Colonic mucosa (tissue), 4 donors: ENCODE measurements at regions of chr14 and their contacts with region 1.

Region 1: GRCh38 chr14:70714055-70714621 is 72.4 kb downstream of the TTC9 start:
- DNase-seq: peak; percentile 54
- H3K4me3 ChIP-seq: no peak overlapping the region
- H3K27ac ChIP-seq: no peak overlapping the region
- H3K4me1 ChIP-seq: no peaks in the 10 kb centered on the region
- H3K27me3 ChIP-seq: no peaks in the 10 kb centered on the region
- CTCF ChIP-seq: peak; percentile 59

Region 2: DNA sequence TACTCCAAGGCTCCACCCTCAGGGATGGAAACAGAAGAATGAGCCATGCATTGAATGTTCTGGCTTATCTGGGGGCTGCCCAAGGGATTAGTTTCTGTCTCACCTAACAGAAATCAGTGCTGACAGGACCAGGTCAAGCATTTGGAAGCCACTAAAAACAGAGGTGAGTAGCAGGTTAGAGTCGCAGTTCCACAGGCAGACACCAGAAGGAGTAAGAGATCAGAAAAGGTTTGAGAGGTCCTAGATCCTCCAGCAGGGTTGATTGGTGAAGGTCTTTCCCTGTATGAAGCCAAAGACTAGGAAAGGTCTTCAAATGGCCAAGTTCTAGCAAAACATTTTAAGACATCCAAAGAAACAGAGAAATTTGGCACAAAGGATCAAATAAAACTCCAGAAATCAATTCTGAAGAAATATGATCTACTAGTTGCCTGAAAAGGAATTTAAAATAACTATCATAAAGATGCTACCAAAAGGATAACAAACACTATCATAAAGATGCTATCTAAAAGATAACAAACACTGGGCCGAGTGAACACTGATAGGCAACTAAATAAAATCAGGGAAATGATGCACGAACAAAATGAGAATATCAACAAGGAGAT is 91.9 kb before region 1 on chr14:
- intact Hi-C with region 1: loop called (anchors 5 kb)
- DNase-seq: peak; percentile 52
- H3K4me3 ChIP-seq: no peak overlapping the region
- H3K27ac ChIP-seq: no peak overlapping the region
- H3K4me1 ChIP-seq: no peaks in the 10 kb centered on the region
- H3K27me3 ChIP-seq: no peaks in the 10 kb centered on the region
- CTCF ChIP-seq: peak; percentile 61